Gastrocnemius medialis (tissue), 4 donors: ENCODE measurements at regions of chr19 and their contacts with region 1.

Region 1: GRCh38 chr19:19170053-19170872 is at the start of gene MEF2B:
- DNase-seq: peak; percentile 67 to 80
- ATAC-seq: peak; percentile 73 to 81
- H3K4me3 ChIP-seq: peak within 1 kb of the TSS; percentile 45 to 55 (median 52)
- H3K27ac ChIP-seq: peak within 1 kb of the TSS in 2 of 4 donors; percentile 14 to 15
- H3K4me1 ChIP-seq: peaks cover 19 to 26% of the 10 kb centered on the region in 2 donors
- H3K27me3 ChIP-seq: no peaks in the 10 kb centered on the region
- CTCF ChIP-seq: no peak
- POLR2A ChIP-seq: no peak
- total RNA-seq, gene MEF2B: 0.68 to 1.6 TPM in 2 of 4 donors, not detected in the others

Region 2: GRCh38 chr19:19053508-19054314 is 116.6 kb before region 1 on chr19:
- in situ Hi-C with region 1: no loop called
- intact Hi-C with region 1: loop called (anchors 1 kb)
- DNase-seq: peak in 1 of 2 donors; percentile 71
- ATAC-seq: peak; percentile 77 to 82
- H3K4me3 ChIP-seq: no peak overlapping the region
- H3K27ac ChIP-seq: no peak overlapping the region
- H3K4me1 ChIP-seq: peaks cover under 1 to 3% of the 10 kb centered on the region in 2 donors
- H3K27me3 ChIP-seq: no peaks in the 10 kb centered on the region
- CTCF ChIP-seq: peak; percentile 79 to 93 (median 91)
- POLR2A ChIP-seq: no peak

Region 3: DNA sequence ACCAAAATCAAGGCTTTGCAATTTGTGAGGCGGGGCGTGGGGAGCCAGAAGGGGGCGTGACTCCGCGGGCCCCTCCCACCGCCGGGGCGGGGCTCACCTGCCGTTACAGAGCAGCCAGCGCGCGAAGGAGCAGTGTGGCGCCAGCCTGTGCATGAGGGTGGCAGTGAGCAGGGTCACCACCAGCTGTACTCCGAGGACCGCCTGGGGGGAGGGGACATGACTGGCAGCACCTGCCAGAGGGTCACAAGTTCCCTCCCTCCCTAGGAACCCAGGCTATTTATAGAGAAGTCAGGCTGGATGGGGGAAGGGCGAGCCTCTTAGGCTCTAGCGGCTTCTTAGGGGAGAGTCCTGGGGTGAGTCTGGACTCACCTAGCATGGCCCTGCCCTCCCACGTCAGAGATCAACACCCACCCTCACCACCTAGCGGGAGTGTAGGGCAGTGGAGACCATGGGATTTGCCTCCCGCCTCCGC is 35.5 kb before region 1 on chr19:
- in situ Hi-C with region 1: no loop called
- intact Hi-C with region 1: no loop called
- DNase-seq: peak in 1 of 2 donors; percentile 72
- ATAC-seq: peak in 1 of 2 donors; percentile 18
- H3K4me3 ChIP-seq: peak overlapping the region in 1 of 4 donors; percentile 5
- H3K27ac ChIP-seq: peak overlapping the region in 3 of 4 donors; percentile 24 to 98 (median 96)
- H3K4me1 ChIP-seq: peaks cover 7 to 14% of the 10 kb centered on the region in 2 donors
- H3K27me3 ChIP-seq: no peaks in the 10 kb centered on the region
- CTCF ChIP-seq: peak in 2 of 5 experiments; percentile 29 to 40
- POLR2A ChIP-seq: peak; percentile 49 to 69

Region 4: GRCh38 chr19:19145684-19146608 is 24.3 kb before region 1 on chr19:
- in situ Hi-C with region 1: loop called in 1 of 4 experiments (anchors 5 kb)
- intact Hi-C with region 1: loop called (anchors 1 kb)
- DNase-seq: peak; percentile 44 to 72
- ATAC-seq: peak; percentile 63 to 88
- H3K4me3 ChIP-seq: peak overlapping the region in 3 of 4 donors; percentile 21 to 46 (median 22)
- H3K27ac ChIP-seq: no peak overlapping the region
- H3K4me1 ChIP-seq: peaks cover 0 to 4% of the 10 kb centered on the region in 2 donors
- H3K27me3 ChIP-seq: no peaks in the 10 kb centered on the region
- CTCF ChIP-seq: peak; percentile 81 to 99 (median 98)
- POLR2A ChIP-seq: no peak

Region 5: GRCh38 chr19:19259741-19260140 is 89.5 kb after region 1 on chr19:
- in situ Hi-C with region 1: no loop called
- intact Hi-C with region 1: no loop called
- DNase-seq: no peak
- ATAC-seq: no peak
- H3K4me3 ChIP-seq: no peak overlapping the region
- H3K27ac ChIP-seq: no peak overlapping the region
- H3K4me1 ChIP-seq: no peaks in the 10 kb centered on the region
- H3K27me3 ChIP-seq: peaks cover 39 to 55% (median 43%) of the 10 kb centered on the region in 3 donors
- CTCF ChIP-seq: no peak
- POLR2A ChIP-seq: no peak